Posterior vena cava (tissue), 2 donors: ENCODE measurements at regions of chr2 and their contacts with region 1.

Region 1: GRCh38 chr2:234770031-234770506 is 181.7 kb upstream of the SH3BP4 start:
- DNase-seq: peak; percentile 56

Region 2: GRCh38 chr2:235135990-235136561 is 366.0 kb after region 1 on chr2:
- intact Hi-C with region 1: no loop called
- DNase-seq: peak; percentile 88

Region 3: GRCh38 chr2:235170536-235171521 is 400.8 kb after region 1 on chr2:
- intact Hi-C with region 1: loop called in 1 of 2 experiments (anchors 5 kb)
- DNase-seq: no peak